WTC11 (cell line): ENCODE measurements at regions of chr14 and their contacts with region 1.

Region 1: GRCh38 chr14:64910847-64911495 is 3.3 kb upstream of the CHURC1 start:
- DNase-seq: no peak
- ATAC-seq: no peak
- H3K4me3 Mint-ChIP-seq: no peak overlapping the region
- H3K27ac Mint-ChIP-seq: no peak overlapping the region
- H3K4me1 Mint-ChIP-seq: peaks cover 11% of the 10 kb centered on the region
- H3K27me3 Mint-ChIP-seq: no peaks in the 10 kb centered on the region; the same call in none of the 2 replicates
- CTCF ChIP-seq: peak; percentile 41; the same call in 1 of the 2 replicates

Region 2: GRCh38 chr14:64800000-64800399 is 111.0 kb before region 1 on chr14:
- CTCF ChIA-PET with region 1: interaction called, 29 read pairs
- POLR2A ChIA-PET with region 1: no interaction called
- DNase-seq: peak; percentile 38
- ATAC-seq: peak; percentile 49
- H3K4me3 Mint-ChIP-seq: no peak overlapping the region
- H3K27ac Mint-ChIP-seq: no peak overlapping the region
- H3K4me1 Mint-ChIP-seq: peaks cover 3% of the 10 kb centered on the region; the same call in 1 of the 2 replicates
- H3K27me3 Mint-ChIP-seq: no peaks in the 10 kb centered on the region; the same call in 1 of the 2 replicates
- CTCF ChIP-seq: 0 out of 2 replicates have a peak, but pooled peaks have one; percentile 26

Region 3: DNA sequence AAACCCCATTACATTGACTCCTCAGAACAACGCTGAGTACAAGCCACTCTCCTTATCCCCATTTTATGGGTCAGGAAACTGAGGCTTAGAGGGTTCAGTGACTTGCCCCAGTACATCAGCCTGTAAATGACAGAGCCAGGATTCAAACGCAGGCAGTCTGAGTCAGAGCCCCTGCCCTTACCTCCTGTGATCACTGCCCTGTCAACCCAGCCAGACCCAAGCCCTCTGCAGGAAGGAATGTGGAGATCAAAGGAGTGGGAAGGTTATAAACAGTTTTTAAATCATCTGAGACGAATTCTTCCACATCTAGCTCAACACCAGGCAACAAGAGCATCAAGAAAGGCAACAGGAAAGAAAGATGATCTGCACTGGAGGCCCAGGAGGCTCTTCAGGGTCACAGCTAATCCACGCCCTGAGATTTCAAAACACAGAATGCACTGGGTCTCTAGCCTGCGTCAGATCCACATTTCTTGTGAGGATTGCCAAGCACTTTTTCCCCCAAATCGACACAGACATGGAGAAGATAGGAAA is 69.8 kb before region 1 on chr14:
- CTCF ChIA-PET with region 1: interaction called, 10 read pairs
- POLR2A ChIA-PET with region 1: no interaction called
- DNase-seq: peak; percentile 58
- ATAC-seq: peak; percentile 96
- H3K4me3 Mint-ChIP-seq: no peak overlapping the region
- H3K27ac Mint-ChIP-seq: peak overlapping the region; percentile 14
- H3K4me1 Mint-ChIP-seq: peaks cover 19% of the 10 kb centered on the region
- H3K27me3 Mint-ChIP-seq: no peaks in the 10 kb centered on the region
- CTCF ChIP-seq: peak; percentile 39; the same call in 1 of the 2 replicates

Region 4: DNA sequence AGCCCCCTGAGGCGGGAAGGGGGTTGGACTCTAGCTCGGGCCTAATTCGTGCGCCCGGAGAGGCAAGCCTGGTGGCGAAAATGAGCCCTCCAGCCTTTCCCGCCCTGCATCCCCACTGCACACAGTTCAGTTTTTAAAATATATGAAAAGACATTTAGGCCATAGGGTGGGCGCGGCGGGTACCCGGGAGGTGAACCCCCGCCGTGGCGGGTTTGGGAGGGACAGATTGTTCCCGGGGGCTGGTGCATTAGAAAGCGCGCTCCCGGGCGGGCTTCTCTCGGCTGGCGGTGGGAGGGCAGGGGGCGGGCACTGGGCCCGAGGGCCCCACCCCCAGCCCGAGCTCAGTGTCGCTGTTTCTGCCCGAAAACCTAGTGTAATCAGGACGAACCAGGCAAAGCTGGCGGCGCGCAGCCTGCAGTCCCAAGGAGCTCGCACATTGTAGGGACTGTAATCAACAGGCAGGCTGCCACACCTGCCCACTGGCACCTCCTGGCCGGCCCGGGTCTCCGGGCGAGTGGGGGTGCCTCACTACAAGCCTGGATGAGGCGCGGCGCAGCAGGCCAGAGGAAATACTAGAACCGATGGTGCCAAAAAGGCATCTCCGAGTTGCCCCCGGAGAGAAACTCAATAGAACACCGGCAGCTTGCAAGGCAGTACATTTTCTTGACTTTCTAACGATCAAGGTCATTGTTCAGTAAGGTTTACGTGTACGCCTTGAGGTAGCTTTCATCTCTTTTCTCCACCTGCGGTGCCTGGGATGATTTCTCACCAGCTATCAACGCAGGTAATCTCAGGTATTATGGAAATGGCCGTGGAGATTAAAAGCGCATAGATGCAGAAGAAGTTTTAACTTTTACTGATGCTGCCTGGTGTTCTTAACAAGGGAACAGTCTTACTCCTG is 30.5 kb before region 1 on chr14:
- CTCF ChIA-PET with region 1: interaction called, 30 read pairs
- POLR2A ChIA-PET with region 1: no interaction called
- DNase-seq: peak; percentile 77
- ATAC-seq: peak; percentile 85
- H3K4me3 Mint-ChIP-seq: peak overlapping the region; percentile 88
- H3K27ac Mint-ChIP-seq: peak overlapping the region; percentile 41; the same call in 1 of the 2 replicates
- H3K4me1 Mint-ChIP-seq: peaks cover 18% of the 10 kb centered on the region
- H3K27me3 Mint-ChIP-seq: peaks cover 70% of the 10 kb centered on the region
- CTCF ChIP-seq: no peak

Region 5: GRCh38 chr14:64960762-64961278 is 49.8 kb after region 1 on chr14:
- CTCF ChIA-PET with region 1: interaction called, 11 read pairs
- POLR2A ChIA-PET with region 1: interaction called, 3 read pairs
- DNase-seq: peak; percentile 66
- ATAC-seq: peak; percentile 79
- H3K4me3 Mint-ChIP-seq: no peak overlapping the region
- H3K27ac Mint-ChIP-seq: no peak overlapping the region; the same call in 1 of the 2 replicates
- H3K4me1 Mint-ChIP-seq: peaks cover 40% of the 10 kb centered on the region
- H3K27me3 Mint-ChIP-seq: no peaks in the 10 kb centered on the region
- CTCF ChIP-seq: peak; percentile 10; the same call in 1 of the 2 replicates

Region 6: GRCh38 chr14:64971943-64972791 is 61.2 kb after region 1 on chr14 and contains the start of gene RAB15:
- CTCF ChIA-PET with region 1: interaction called, 10 read pairs
- POLR2A ChIA-PET with region 1: interaction called, 3 read pairs
- DNase-seq: peak; percentile 43
- ATAC-seq: peak; percentile 62
- H3K4me3 Mint-ChIP-seq: peak within 1 kb of the TSS; percentile 78
- H3K27ac Mint-ChIP-seq: no peak within 1 kb of the TSS
- H3K4me1 Mint-ChIP-seq: peaks cover 72% of the 10 kb centered on the region
- H3K27me3 Mint-ChIP-seq: no peaks in the 10 kb centered on the region; the same call in 1 of the 2 replicates
- CTCF ChIP-seq: no peak
- total RNA-seq, gene RAB15: 38.4 to 49.1 TPM (median 38.6 TPM) in 3 replicates

Region 7: GRCh38 chr14:65074449-65075150 is 163.6 kb after region 1 on chr14:
- CTCF ChIA-PET with region 1: no interaction called
- POLR2A ChIA-PET with region 1: no interaction called
- DNase-seq: no peak
- ATAC-seq: no peak
- H3K4me3 Mint-ChIP-seq: no peak overlapping the region
- H3K27ac Mint-ChIP-seq: no peak overlapping the region
- H3K4me1 Mint-ChIP-seq: no peaks in the 10 kb centered on the region
- H3K27me3 Mint-ChIP-seq: no peaks in the 10 kb centered on the region
- CTCF ChIP-seq: no peak